ENCODE measurements at regions of chr5 and their contacts with region 1.

Region 1: DNA sequence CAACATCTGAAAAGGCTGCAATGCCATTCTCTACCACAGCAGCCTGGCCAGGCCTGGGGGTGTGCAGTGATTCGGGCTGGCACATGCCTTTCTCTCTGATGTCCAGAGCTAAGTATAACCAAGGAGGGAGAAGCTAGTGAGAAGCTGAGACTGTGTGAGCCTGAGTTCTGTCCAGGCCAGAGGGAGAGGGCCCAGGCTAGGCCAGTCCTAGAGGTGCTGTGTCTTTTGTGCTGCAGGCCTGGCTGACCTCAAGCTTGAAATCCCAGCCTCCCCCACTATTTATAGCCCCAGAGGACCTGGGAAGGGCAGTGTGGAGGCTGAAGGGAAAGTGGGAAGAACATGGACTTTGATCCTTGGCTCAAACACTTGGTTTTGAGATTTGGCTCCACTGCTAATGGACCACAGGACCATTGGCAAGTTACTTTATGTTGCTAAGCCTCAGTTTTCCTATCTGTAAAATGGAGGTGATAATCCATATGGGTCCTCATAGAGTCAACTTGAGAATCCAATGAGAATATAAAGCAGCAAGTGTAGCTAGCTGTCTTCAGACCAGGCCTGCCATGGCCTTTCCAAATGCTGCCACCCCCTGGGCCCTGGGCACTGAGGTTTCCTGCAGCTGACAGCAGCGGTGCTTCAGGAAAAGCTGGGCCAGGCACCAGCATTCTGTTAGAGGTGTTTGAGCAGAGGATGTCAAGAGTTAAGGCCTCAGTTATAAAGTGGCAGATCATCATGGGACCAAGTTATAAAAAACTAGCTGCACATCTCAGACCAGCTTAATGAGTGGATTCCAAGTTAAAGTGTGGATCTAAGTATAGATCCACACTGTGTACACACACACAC is 21.1 kb downstream of the BNIP1 start:
- DNase-seq: no peak
- ATAC-seq: no peak
- H3K4me3 Mint-ChIP-seq: no peak overlapping the region
- H3K27ac Mint-ChIP-seq: no peak overlapping the region
- H3K4me1 Mint-ChIP-seq: no peaks in the 10 kb centered on the region
- H3K27me3 Mint-ChIP-seq: no peaks in the 10 kb centered on the region

Region 2: GRCh38 chr5:173283318-173284288 is 118.2 kb after region 1 on chr5:
- CTCF ChIA-PET with region 1: no interaction called
- POLR2A ChIA-PET with region 1: no interaction called
- intact Hi-C with region 1: loop called (anchors 1 to 2 kb)
- DNase-seq: peak; percentile 90
- ATAC-seq: peak; percentile 96
- H3K4me3 Mint-ChIP-seq: peak overlapping the region; percentile 25
- H3K27ac Mint-ChIP-seq: no peak overlapping the region
- H3K4me1 Mint-ChIP-seq: peaks cover 9% of the 10 kb centered on the region
- H3K27me3 Mint-ChIP-seq: peaks cover 44% of the 10 kb centered on the region